Esophagus muscularis mucosa (tissue), 4 donors: ENCODE measurements at regions of chr22 and their contacts with region 1.

Region 1: GRCh38 chr22:29245637-29246385 is 22.0 kb downstream of the RHBDD3 start:
- DNase-seq: no peak
- H3K4me3 ChIP-seq: no peak overlapping the region
- H3K27ac ChIP-seq: no peak overlapping the region
- H3K4me1 ChIP-seq: peaks cover 0 to 8% (median 1%) of the 10 kb centered on the region in 4 donors
- H3K27me3 ChIP-seq: no peaks in the 10 kb centered on the region
- CTCF ChIP-seq: peak; percentile 93 to 100 (median 94)
- EP300 ChIP-seq: no peak
- POLR2A ChIP-seq: no peak

Region 2: GRCh38 chr22:29154364-29155048 is 91.3 kb before region 1 on chr22:
- intact Hi-C with region 1: loop called (anchors 5 kb)
- DNase-seq: no peak
- H3K4me3 ChIP-seq: peak overlapping the region in 3 of 4 donors; percentile 20 to 34 (median 33)
- H3K27ac ChIP-seq: no peak overlapping the region
- H3K4me1 ChIP-seq: peaks cover 6 to 45% (median 32%) of the 10 kb centered on the region in 4 donors
- H3K27me3 ChIP-seq: peaks cover 0 to 8% (median 0%) of the 10 kb centered on the region in 4 donors
- CTCF ChIP-seq: peak; percentile 77 to 97 (median 85)
- EP300 ChIP-seq: no peak
- POLR2A ChIP-seq: no peak

Region 3: GRCh38 chr22:29167032-29167911 is 78.5 kb before region 1 on chr22:
- intact Hi-C with region 1: no loop called
- DNase-seq: no peak
- H3K4me3 ChIP-seq: no peak overlapping the region
- H3K27ac ChIP-seq: no peak overlapping the region
- H3K4me1 ChIP-seq: no peaks in the 10 kb centered on the region
- H3K27me3 ChIP-seq: no peaks in the 10 kb centered on the region
- CTCF ChIP-seq: no peak
- EP300 ChIP-seq: no peak
- POLR2A ChIP-seq: no peak